Breast epithelium (tissue), 4 donors: ENCODE measurements at regions of chr12 and their contacts with region 1.

Region 1: GRCh38 chr12:53344824-53345485 is 8.8 kb upstream of the SP7 start:
- DNase-seq: peak; percentile 71 to 72
- H3K4me3 ChIP-seq: peak overlapping the region; percentile 70 to 78 (median 72)
- H3K27ac ChIP-seq: peak overlapping the region; percentile 70 to 87
- H3K4me1 ChIP-seq: no peaks in the 10 kb centered on the region
- H3K27me3 ChIP-seq: no peaks in the 10 kb centered on the region
- CTCF ChIP-seq: peak in 2 of 3 donors; percentile 52 to 76
- POLR2A ChIP-seq: no peak

Region 2: GRCh38 chr12:53174881-53175491 is 170.0 kb before region 1 on chr12:
- intact Hi-C with region 1: loop called (anchors 5 kb)
- DNase-seq: peak in 1 of 2 donors; percentile 54
- H3K4me3 ChIP-seq: no peak overlapping the region
- H3K27ac ChIP-seq: no peak overlapping the region
- H3K4me1 ChIP-seq: peaks cover 4 to 15% of the 10 kb centered on the region in 2 donors
- H3K27me3 ChIP-seq: no peaks in the 10 kb centered on the region
- CTCF ChIP-seq: no peak
- POLR2A ChIP-seq: no peak